Naive thymus-derived CD4-positive, alpha-beta T cell (primary cell): ENCODE measurements at regions of chr15 and their contacts with region 1.

Region 1: GRCh38 chr15:91852741-91853510 is 582 bp upstream of the SLCO3A1 start:
- DNase-seq: peak; percentile 60 to 86 (median 78)
- ATAC-seq: peak; percentile 79
- H3K4me3 ChIP-seq: peak overlapping the region; percentile 72
- H3K4me3 Mint-ChIP-seq: peak overlapping the region; percentile 79 to 90 (median 86)
- H3K27ac ChIP-seq: peak overlapping the region; percentile 76
- H3K27ac Mint-ChIP-seq: peak overlapping the region; percentile 79 to 96 (median 89)
- H3K4me1 ChIP-seq: peaks cover 46 to 59% of the 10 kb centered on the region in 2 donors
- H3K4me1 Mint-ChIP-seq: peaks cover 50 to 70% (median 60%) of the 10 kb centered on the region in 7 donors
- H3K27me3 ChIP-seq: no peaks in the 10 kb centered on the region
- H3K27me3 Mint-ChIP-seq: peaks cover 0 to 9% (median 0%) of the 10 kb centered on the region in 5 donors

Region 2: DNA sequence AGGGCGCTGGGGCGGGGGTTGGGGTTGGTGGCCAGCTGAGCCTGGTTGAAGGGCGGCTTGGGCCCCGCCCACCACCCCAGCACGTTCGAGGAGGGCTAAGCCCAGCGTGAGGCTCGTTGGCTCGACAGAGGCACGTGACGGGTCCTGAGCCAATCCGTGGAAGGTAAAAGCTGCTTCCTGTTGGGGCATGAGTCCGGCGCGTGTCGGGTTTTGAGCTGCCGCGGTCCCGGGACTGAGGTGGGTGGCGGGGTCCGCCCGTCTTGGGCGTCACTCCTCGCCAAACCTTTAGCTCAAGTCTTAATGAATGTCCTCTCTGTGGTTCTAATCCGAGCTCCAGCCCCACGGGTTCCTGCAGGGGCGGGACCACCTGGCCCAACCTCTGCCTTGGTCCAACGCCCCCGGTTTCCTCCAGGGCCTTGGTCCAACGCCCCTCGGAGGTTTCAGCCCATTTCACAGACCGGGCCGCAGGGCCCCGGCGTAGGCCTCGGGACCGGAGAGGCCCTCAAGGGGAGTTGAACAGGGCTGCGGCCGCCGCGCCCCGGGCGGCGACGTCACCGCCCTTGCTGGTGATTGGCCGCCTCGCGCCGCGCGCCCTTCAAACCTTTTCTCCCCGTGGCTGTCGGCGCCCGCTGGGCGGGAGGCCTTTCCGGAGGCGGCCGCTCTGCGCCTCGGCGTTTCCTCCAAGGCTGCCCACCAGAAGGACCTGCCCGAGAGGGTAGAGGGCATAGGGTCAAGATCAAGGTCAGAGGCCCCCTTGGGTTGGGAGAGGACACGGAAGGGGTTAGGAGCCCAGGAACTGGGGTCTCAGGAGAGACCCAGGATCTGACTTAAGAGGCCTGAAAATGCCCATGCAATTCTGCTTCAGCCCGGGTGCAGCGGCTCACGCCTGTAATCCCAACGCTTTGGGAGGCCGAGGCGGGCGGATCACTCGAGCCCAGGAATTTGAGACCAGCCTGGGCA is 897.9 kb before region 1 on chr15 and contains the start of gene RCCD1:
- CTCF ChIA-PET with region 1: no interaction called
- POLR2A ChIA-PET with region 1: no interaction called
- intact Hi-C with region 1: loop called in 1 of 2 experiments (anchors 10 kb)
- DNase-seq: peak; percentile 67 to 90 (median 85)
- ATAC-seq: peak; percentile 98
- H3K4me3 ChIP-seq: peak within 1 kb of the TSS; percentile 100
- H3K4me3 Mint-ChIP-seq: peak within 1 kb of the TSS; percentile 81 to 90 (median 87)
- H3K27ac ChIP-seq: peak within 1 kb of the TSS; percentile 98
- H3K27ac Mint-ChIP-seq: peak within 1 kb of the TSS; percentile 76 to 96 (median 94)
- H3K4me1 ChIP-seq: peaks cover 10 to 15% of the 10 kb centered on the region in 2 donors
- H3K4me1 Mint-ChIP-seq: peaks cover 6 to 24% (median 12%) of the 10 kb centered on the region in 7 donors
- H3K27me3 ChIP-seq: no peaks in the 10 kb centered on the region
- H3K27me3 Mint-ChIP-seq: no peaks in the 10 kb centered on the region
- total RNA-seq, gene RCCD1: 5.8 to 24.6 (median 16.3) TPM

Region 3: DNA sequence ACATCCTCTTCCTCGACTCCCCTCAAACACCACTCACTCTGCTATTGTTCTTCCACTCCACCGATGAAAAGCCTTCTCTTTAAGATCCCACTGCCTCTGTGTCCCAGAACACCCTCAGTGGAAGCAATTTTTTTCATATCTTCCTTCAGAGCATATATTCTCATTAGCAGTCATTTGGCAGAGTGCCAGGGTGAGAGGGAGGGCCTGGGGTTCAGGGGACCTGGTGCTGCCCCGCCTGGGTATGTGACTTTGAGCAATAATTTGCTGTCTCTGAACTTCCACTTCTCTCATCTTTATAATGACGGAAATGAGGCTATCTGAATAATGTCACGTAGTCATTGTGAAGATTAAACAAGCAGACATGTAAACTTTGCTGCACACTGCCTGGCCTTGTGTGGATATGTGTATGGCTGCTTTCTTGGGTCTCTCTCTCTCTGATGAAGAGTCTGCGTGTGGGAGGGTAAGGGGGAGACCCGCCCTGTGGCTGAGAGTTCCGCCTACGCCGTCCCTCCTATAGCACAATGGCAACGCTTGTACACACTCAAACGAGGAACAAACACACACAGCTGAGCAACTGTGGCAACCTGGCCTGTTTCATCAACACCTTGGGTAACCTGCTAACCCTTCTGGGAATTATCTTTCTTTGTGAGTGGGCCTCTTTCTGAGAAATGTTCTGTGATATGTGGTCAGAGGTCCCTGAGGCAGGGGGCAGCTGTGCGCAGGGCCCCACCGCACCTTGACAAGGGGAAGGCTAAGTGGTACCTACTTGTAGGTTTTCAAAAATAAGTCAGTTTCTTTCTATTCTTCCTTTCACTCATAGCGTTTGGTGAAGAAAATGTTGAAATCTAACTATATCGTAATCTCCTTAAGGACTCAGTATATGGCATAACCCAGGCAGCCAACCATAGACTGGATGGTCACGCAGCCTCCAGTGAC is 383.0 kb before region 1 on chr15:
- CTCF ChIA-PET with region 1: interaction called, 3 read pairs
- POLR2A ChIA-PET with region 1: no interaction called
- intact Hi-C with region 1: loop called in 1 of 2 experiments (anchors 5 kb)
- DNase-seq: peak in 8 of 9 donors; percentile 29 to 81 (median 72)
- ATAC-seq: peak; percentile 89
- H3K4me3 ChIP-seq: no peak overlapping the region
- H3K4me3 Mint-ChIP-seq: peak overlapping the region; percentile 6 to 66 (median 52)
- H3K27ac ChIP-seq: peak overlapping the region; percentile 63
- H3K27ac Mint-ChIP-seq: peak overlapping the region; percentile 71 to 96 (median 89)
- H3K4me1 ChIP-seq: peaks cover 47 to 55% of the 10 kb centered on the region in 2 donors
- H3K4me1 Mint-ChIP-seq: peaks cover 29 to 77% (median 58%) of the 10 kb centered on the region in 7 donors
- H3K27me3 ChIP-seq: no peaks in the 10 kb centered on the region
- H3K27me3 Mint-ChIP-seq: no peaks in the 10 kb centered on the region

Region 4: DNA sequence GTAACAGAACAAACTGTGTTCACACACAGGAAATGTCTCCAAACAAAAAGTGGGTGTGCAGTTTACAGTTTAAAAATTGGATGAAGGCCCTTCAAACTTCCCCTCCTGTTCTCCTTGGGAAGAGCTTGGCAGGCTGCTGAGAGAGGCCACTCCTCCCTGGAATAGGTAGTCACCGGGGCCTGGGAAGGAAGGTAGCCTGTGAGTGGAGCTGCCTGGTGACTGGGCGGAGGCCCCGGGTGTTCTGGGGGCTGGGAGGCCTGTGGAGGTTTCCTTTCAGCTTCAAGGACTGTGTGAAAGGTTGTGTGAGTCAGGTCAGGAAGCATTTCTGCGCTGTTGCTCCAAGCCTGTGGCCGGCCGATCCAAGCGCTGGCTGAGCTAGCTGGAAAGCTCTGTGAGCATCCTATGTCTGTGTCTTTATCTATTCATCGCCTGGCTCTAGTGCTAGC is 14.7 kb after region 1 on chr15:
- CTCF ChIA-PET with region 1: interaction called, 11 read pairs
- POLR2A ChIA-PET with region 1: interaction called, 8 read pairs
- intact Hi-C with region 1: loop called (anchors 1 kb)
- DNase-seq: no peak
- ATAC-seq: no peak
- H3K4me3 ChIP-seq: no peak overlapping the region
- H3K4me3 Mint-ChIP-seq: peak overlapping the region in 9 of 10 donors; percentile 7 to 78 (median 46)
- H3K27ac ChIP-seq: no peak overlapping the region
- H3K27ac Mint-ChIP-seq: peak overlapping the region in 4 of 9 donors; percentile 14 to 47 (median 38)
- H3K4me1 ChIP-seq: peaks cover 46 to 55% of the 10 kb centered on the region in 2 donors
- H3K4me1 Mint-ChIP-seq: peaks cover 55 to 90% (median 75%) of the 10 kb centered on the region in 7 donors
- H3K27me3 ChIP-seq: no peaks in the 10 kb centered on the region
- H3K27me3 Mint-ChIP-seq: peaks cover 0 to 9% (median 0%) of the 10 kb centered on the region in 5 donors

Region 5: GRCh38 chr15:91942676-91943576 is 90.0 kb after region 1 on chr15:
- CTCF ChIA-PET with region 1: interaction called, 51 read pairs
- POLR2A ChIA-PET with region 1: interaction called, 5 read pairs
- intact Hi-C with region 1: loop called (anchors 1 kb)
- DNase-seq: peak in 5 of 9 donors; percentile 6 to 32 (median 24)
- ATAC-seq: peak; percentile 82
- H3K4me3 ChIP-seq: no peak overlapping the region
- H3K4me3 Mint-ChIP-seq: peak overlapping the region in 7 of 10 donors; percentile 8 to 81 (median 42)
- H3K27ac ChIP-seq: no peak overlapping the region
- H3K27ac Mint-ChIP-seq: peak overlapping the region in 5 of 9 donors; percentile 23 to 87 (median 67)
- H3K4me1 ChIP-seq: peaks cover 0 to 11% of the 10 kb centered on the region in 2 donors
- H3K4me1 Mint-ChIP-seq: peaks cover 10 to 81% (median 57%) of the 10 kb centered on the region in 7 donors
- H3K27me3 ChIP-seq: no peaks in the 10 kb centered on the region
- H3K27me3 Mint-ChIP-seq: peaks cover 0 to 6% (median 0%) of the 10 kb centered on the region in 5 donors

Region 6: DNA sequence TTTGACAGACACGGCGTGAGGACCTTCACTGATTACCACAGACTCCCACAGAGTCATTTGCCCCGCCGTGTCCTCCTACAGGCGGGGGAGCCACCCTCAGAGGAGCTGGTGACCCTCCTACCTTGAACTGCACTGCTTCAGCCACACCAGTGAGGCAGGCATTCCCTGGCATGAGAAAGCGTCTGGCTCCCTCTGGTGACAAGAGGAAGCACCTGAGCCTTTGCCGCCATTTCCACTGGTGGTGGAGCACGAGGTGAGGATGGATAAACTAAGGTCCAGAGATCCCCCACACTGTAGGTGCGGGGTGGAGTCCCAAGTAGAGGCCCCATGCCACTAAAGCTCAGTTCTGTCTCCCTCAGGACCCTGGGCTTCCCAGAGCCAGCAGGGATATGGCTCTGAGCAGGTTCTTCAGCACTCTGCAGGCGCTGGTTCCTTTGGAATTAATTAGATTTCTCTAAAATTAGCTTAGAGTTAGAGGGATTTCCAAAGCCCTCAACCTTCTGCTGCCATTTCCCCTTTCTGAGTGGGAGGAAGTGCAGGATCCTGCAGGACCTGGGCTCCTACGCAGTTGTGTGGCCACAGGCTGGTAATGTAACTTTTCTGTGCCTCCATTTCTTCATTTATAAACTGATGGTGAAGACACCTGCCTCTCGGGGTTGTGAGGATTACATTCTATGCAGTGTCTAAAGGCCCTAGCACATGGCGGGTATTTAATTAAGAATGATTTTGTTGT is 224.6 kb after region 1 on chr15:
- CTCF ChIA-PET with region 1: interaction called, 18 read pairs
- POLR2A ChIA-PET with region 1: interaction called, 3 read pairs
- intact Hi-C with region 1: loop called (anchors 1 kb)
- DNase-seq: peak; percentile 11 to 58 (median 37)
- ATAC-seq: peak; percentile 71
- H3K4me3 ChIP-seq: no peak overlapping the region
- H3K4me3 Mint-ChIP-seq: no peak overlapping the region
- H3K27ac ChIP-seq: no peak overlapping the region
- H3K27ac Mint-ChIP-seq: no peak overlapping the region
- H3K4me1 ChIP-seq: peaks cover 3 to 4% of the 10 kb centered on the region in 2 donors
- H3K4me1 Mint-ChIP-seq: peaks cover 4 to 42% (median 28%) of the 10 kb centered on the region in 7 donors
- H3K27me3 ChIP-seq: no peaks in the 10 kb centered on the region
- H3K27me3 Mint-ChIP-seq: no peaks in the 10 kb centered on the region